ENCODE measurements at regions of chr5 and their contacts with region 1.

Region 1: GRCh38 chr5:148730943-148731861 is 76.9 kb upstream of the HTR4 start:
- DNase-seq: peak; percentile 87
- H3K4me3 Mint-ChIP-seq: peak overlapping the region; percentile 42
- H3K27ac Mint-ChIP-seq: peak overlapping the region; percentile 78
- H3K4me1 Mint-ChIP-seq: peaks cover 4% of the 10 kb centered on the region
- H3K27me3 Mint-ChIP-seq: peaks cover 1% of the 10 kb centered on the region

Region 2: DNA sequence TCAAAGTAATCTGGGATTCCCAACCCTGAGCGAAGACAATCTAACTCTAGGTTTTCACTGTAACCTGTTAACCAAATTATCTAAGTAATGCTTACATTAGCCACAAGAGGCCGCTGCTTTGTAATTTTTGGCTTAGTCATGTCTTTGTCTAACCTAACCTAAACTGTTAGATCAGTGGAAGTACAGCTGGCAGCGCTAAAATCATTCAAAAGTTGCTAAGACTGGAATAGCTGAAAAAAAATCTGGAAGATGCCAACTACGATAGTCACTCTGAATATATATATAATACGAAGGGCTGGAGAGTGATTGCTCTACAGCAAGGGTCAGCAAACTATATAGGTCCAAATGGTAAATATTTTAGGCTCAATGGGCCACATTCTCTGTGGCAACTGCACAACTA is 287.2 kb before region 1 on chr5:
- CTCF ChIA-PET with region 1: interaction called, 35 read pairs
- POLR2A ChIA-PET with region 1: no interaction called
- DNase-seq: peak; percentile 70
- H3K4me3 Mint-ChIP-seq: no peak overlapping the region
- H3K27ac Mint-ChIP-seq: no peak overlapping the region
- H3K4me1 Mint-ChIP-seq: no peaks in the 10 kb centered on the region
- H3K27me3 Mint-ChIP-seq: no peaks in the 10 kb centered on the region

Region 3: GRCh38 chr5:148711961-148712360 is 19.2 kb before region 1 on chr5:
- CTCF ChIA-PET with region 1: no interaction called
- POLR2A ChIA-PET with region 1: no interaction called
- DNase-seq: no peak
- H3K4me3 Mint-ChIP-seq: no peak overlapping the region
- H3K27ac Mint-ChIP-seq: no peak overlapping the region
- H3K4me1 Mint-ChIP-seq: no peaks in the 10 kb centered on the region
- H3K27me3 Mint-ChIP-seq: peaks cover 11% of the 10 kb centered on the region

Region 4: GRCh38 chr5:149035372-149035790 is 304.2 kb after region 1 on chr5:
- CTCF ChIA-PET with region 1: interaction called, 18 read pairs
- POLR2A ChIA-PET with region 1: no interaction called
- DNase-seq: peak; percentile 72
- H3K4me3 Mint-ChIP-seq: no peak overlapping the region
- H3K27ac Mint-ChIP-seq: no peak overlapping the region
- H3K4me1 Mint-ChIP-seq: peaks cover 31% of the 10 kb centered on the region
- H3K27me3 Mint-ChIP-seq: no peaks in the 10 kb centered on the region